PC-9 (cell line): ENCODE measurements at regions of chr14 and their contacts with region 1.

Region 1: GRCh38 chr14:88181072-88181471 is 142.0 kb downstream of the KCNK10 start:
- DNase-seq: no peak
- H3K4me3 ChIP-seq: no peak overlapping the region
- H3K27ac ChIP-seq: no peak overlapping the region
- H3K4me1 ChIP-seq: no peaks in the 10 kb centered on the region
- H3K27me3 ChIP-seq: peaks cover 6% of the 10 kb centered on the region
- CTCF ChIP-seq: no peak

Region 2: GRCh38 chr14:87944987-87945604 is 236.0 kb before region 1 on chr14:
- CTCF ChIA-PET with region 1: no interaction called
- POLR2A ChIA-PET with region 1: no interaction called
- intact Hi-C with region 1: loop called (anchors 10 kb)
- DNase-seq: no peak
- H3K4me3 ChIP-seq: no peak overlapping the region
- H3K27ac ChIP-seq: no peak overlapping the region
- H3K4me1 ChIP-seq: no peaks in the 10 kb centered on the region
- H3K27me3 ChIP-seq: no peaks in the 10 kb centered on the region
- CTCF ChIP-seq: peak; percentile 74

Region 3: DNA sequence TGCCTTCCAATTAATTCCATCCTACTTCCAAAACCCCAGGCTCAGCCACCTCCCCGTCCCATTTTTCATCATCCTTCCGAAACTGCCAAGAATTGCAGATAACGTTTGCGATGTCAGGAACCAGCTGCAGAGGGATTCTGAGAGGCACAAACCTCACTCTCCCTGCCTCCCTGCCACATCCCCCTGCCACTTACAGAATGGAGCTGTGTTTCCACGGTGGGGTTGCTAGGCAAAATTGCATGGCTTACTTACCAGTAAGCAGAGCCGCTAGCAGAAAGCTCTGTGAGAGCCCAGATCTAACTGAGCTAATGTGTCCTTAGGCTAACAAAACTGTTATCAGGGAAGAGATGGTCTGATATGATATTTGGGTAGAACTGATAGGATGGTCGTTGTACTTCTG is 14.6 kb after region 1 on chr14:
- CTCF ChIA-PET with region 1: no interaction called
- POLR2A ChIA-PET with region 1: no interaction called
- intact Hi-C with region 1: loop called (anchors 2 kb)
- DNase-seq: no peak
- H3K4me3 ChIP-seq: no peak overlapping the region
- H3K27ac ChIP-seq: no peak overlapping the region
- H3K4me1 ChIP-seq: no peaks in the 10 kb centered on the region
- H3K27me3 ChIP-seq: peaks cover 50% of the 10 kb centered on the region
- CTCF ChIP-seq: no peak